Heart right ventricle (tissue), 16 donors: ENCODE measurements at regions of chr5 and their contacts with region 1.

Region 1: GRCh38 chr5:91090995-91091394 is 292.1 kb downstream of the ARRDC3 start:
- DNase-seq: no peak
- ATAC-seq: no peak
- H3K4me3 ChIP-seq: no peak overlapping the region
- H3K27ac ChIP-seq: no peak overlapping the region
- H3K4me1 ChIP-seq: no peaks in the 10 kb centered on the region
- H3K27me3 ChIP-seq: no peaks in the 10 kb centered on the region
- CTCF ChIP-seq: no peak

Region 2: DNA sequence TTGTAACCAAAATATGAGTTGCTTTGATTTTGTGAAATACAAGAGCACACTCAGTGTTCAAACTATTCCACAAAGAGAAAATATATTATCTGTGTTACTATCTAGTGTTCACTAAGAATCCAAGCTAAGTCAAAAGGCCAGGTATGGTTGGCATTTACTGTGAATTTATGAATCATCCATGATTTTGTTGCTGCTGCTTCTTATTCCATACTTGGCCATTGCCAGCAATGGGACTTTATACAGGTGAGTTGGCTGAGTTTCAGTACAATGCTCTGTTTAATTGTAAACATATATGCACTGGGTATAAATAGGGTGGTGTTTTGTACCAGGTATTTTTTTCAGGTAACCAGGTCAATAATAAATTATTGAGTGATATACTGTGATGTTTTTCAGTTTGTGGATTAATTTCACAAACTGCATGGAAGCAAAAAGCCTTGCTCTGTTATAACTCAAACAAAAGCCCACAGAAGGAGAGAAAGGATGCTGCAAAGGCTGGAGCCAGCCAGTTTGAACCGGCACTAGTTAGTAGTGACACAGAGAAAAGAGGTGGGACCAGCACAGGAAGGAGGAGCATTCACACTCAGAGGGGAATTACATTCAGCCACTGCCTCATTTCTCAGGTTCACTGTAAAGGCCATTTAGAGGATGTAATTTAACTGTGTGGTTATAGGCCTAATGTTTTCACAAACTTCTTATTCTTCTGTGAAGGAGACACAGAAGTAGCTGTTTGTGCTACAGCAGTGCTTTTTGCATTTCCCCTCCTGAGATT is 150.6 kb before region 1 on chr5:
- intact Hi-C with region 1: loop called in 4 of 10 experiments (anchors 10 kb)
- DNase-seq: no peak
- ATAC-seq: no peak
- H3K4me3 ChIP-seq: no peak overlapping the region
- H3K27ac ChIP-seq: no peak overlapping the region
- H3K4me1 ChIP-seq: peaks cover 0 to 6% (median 0%) of the 10 kb centered on the region in 9 donors
- H3K27me3 ChIP-seq: no peaks in the 10 kb centered on the region
- CTCF ChIP-seq: no peak